CD4-positive, alpha-beta T cell (primary cell): ENCODE measurements at regions of chr6 and their contacts with region 1.

Region 1: DNA sequence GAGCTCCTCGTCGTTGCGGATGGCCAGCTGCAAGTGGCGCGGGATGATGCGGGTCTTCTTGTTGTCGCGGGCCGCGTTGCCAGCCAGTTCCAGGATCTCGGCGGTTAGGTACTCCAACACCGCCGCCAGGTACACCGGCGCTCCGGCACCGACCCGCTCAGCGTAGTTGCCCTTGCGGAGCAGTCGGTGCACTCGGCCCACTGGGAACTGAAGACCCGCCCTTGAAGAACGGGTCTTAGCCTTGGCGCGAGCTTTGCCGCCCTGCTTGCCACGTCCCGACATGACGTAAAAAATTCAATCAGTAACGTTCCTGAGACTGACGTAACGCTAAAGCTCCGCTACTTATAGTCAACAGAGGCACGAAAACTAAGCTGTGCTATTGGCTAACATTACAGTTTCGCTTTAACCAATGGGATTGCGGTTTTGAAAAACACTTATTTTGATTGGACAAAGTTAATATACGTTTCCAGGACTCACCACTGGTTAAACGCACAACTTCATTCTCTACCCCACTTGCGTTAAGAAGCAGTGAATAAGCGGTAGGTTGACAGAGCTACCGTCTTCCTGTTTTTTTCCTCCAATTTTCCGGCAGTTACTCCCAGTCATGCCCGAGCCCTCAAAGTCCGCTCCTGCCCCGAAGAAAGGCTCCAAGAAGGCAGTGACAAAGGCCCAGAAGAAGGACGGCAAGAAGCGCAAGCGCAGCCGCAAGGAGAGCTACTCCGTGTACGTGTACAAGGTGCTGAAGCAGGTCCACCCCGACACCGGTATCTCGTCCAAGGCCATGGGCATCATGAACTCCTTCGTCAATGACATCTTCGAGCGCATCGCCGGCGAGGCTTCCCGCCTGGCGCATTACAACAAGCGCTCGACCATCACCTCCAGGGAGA is 73.9 kb downstream of the OR2B2 start:
- DNase-seq: peak; percentile 52 to 98 (median 73)
- ATAC-seq: peak; percentile 73
- H3K4me3 ChIP-seq: peak overlapping the region; percentile 83
- H3K4me3 Mint-ChIP-seq: no peak overlapping the region
- H3K27ac ChIP-seq: peak overlapping the region; percentile 92 to 97
- H3K27ac Mint-ChIP-seq: no peak overlapping the region
- H3K4me1 ChIP-seq: peaks cover 32% of the 10 kb centered on the region
- H3K4me1 Mint-ChIP-seq: peaks cover 6% of the 10 kb centered on the region
- H3K27me3 ChIP-seq: peaks cover 0 to 6% of the 10 kb centered on the region in 2 experiments
- H3K27me3 Mint-ChIP-seq: peaks cover 12% of the 10 kb centered on the region
- CTCF ChIP-seq: no peak

Region 2: DNA sequence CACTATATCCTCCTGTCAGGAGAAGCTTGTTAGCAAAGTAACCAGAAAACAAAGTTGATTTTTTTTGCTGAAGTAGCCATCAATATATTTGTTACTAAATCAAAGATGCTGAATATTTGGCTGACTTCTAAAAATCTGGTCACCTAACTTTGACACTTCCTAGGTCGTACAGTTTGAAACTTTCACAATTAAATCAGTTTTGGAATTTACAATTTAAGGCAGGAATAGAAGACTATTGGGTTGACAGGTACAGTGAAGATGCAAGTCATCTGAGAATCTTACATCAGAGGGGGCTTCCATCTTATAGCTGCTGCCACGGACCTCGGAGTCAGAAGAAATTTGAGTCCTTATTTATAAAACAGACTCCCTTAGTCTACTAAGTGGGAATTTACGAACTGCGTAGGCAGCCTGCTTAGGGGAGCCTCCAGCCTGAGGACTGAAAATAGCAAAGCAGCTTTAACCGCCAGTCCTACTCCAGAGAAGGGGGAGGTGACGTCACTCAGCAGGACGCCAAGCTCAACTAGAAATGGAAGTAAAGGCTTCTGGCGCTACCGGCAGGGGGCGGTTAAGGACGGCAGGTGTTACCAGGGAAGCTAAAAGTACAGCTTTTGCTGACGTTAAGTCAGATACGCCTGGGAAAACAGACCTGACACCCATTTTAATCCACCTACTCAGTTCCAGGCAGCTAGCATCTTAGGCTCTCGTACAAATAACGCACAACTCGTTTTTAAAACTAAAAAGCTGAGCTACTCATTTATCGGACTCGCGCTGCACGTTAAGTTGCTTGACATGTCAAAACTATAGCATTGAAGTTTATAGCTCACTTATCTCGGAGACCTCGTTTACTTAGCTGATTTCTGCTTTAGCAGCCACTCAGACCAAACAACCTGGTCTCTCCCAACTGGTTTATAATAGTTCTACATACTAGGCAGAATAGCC is 1812.1 kb before region 1 on chr6:
- CTCF ChIA-PET with region 1: no interaction called
- POLR2A ChIA-PET with region 1: interaction called, 85 read pairs
- intact Hi-C with region 1: no loop called
- DNase-seq: peak; percentile 75 to 98 (median 88)
- ATAC-seq: peak; percentile 45
- H3K4me3 ChIP-seq: peak overlapping the region; percentile 70
- H3K4me3 Mint-ChIP-seq: peak overlapping the region; percentile 90
- H3K27ac ChIP-seq: peak overlapping the region; percentile 86 to 88
- H3K27ac Mint-ChIP-seq: peak overlapping the region; percentile 97
- H3K4me1 ChIP-seq: peaks cover 34% of the 10 kb centered on the region
- H3K4me1 Mint-ChIP-seq: peaks cover 42% of the 10 kb centered on the region
- H3K27me3 ChIP-seq: no peaks in the 10 kb centered on the region
- H3K27me3 Mint-ChIP-seq: no peaks in the 10 kb centered on the region
- CTCF ChIP-seq: peak; percentile 86

Region 3: DNA sequence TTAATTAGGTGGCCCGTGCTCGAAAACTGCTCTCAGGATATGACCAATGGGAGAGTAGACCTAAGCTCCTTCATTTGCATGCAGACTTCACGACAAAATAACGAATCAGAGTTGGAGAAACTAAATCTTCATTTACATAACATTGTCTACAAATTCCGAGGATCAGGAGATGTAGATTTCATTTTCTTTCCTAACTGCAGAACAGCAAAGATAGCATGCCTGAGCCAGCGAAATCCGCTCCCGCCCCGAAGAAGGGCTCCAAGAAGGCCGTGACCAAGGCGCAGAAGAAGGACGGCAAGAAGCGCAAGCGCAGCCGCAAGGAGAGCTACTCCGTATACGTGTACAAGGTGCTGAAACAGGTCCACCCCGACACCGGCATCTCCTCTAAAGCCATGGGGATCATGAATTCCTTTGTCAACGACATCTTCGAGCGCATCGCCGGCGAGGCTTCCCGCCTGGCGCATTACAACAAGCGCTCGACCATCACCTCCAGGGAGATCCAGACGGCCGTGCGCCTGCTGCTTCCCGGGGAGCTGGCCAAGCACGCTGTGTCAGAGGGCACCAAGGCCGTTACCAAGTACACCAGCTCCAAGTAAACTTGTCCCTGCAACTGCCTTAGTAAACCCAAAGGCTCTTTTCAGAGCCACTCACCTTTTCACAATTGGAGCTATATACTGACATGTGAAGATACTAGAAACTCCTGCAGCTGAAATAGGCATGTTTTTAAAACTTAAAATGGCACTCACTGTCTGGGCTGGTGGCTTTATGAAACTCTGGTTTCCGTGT is 1654.5 kb before region 1 on chr6:
- CTCF ChIA-PET with region 1: no interaction called
- POLR2A ChIA-PET with region 1: interaction called, 18 read pairs
- intact Hi-C with region 1: no loop called
- DNase-seq: peak in 13 of 14 experiments; percentile 20 to 94 (median 48)
- ATAC-seq: peak; percentile 89
- H3K4me3 ChIP-seq: peak overlapping the region; percentile 62
- H3K4me3 Mint-ChIP-seq: peak overlapping the region; percentile 99
- H3K27ac ChIP-seq: peak overlapping the region; percentile 43 to 72
- H3K27ac Mint-ChIP-seq: peak overlapping the region; percentile 86
- H3K4me1 ChIP-seq: peaks cover 34% of the 10 kb centered on the region
- H3K4me1 Mint-ChIP-seq: peaks cover 42% of the 10 kb centered on the region
- H3K27me3 ChIP-seq: no peaks in the 10 kb centered on the region
- H3K27me3 Mint-ChIP-seq: no peaks in the 10 kb centered on the region
- CTCF ChIP-seq: no peak

Region 4: GRCh38 chr6:27132532-27133280 is 705.6 kb before region 1 on chr6:
- CTCF ChIA-PET with region 1: no interaction called
- POLR2A ChIA-PET with region 1: interaction called, 89 read pairs
- intact Hi-C with region 1: no loop called
- DNase-seq: peak; percentile 80 to 99 (median 88)
- ATAC-seq: peak; percentile 79
- H3K4me3 ChIP-seq: peak overlapping the region; percentile 75
- H3K4me3 Mint-ChIP-seq: no peak overlapping the region
- H3K27ac ChIP-seq: peak overlapping the region; percentile 79 to 81
- H3K27ac Mint-ChIP-seq: no peak overlapping the region
- H3K4me1 ChIP-seq: peaks cover 31% of the 10 kb centered on the region
- H3K4me1 Mint-ChIP-seq: peaks cover 12% of the 10 kb centered on the region
- H3K27me3 ChIP-seq: no peaks in the 10 kb centered on the region
- H3K27me3 Mint-ChIP-seq: no peaks in the 10 kb centered on the region
- CTCF ChIP-seq: no peak

Region 5: GRCh38 chr6:27479319-27480182 is 358.8 kb before region 1 on chr6:
- CTCF ChIA-PET with region 1: no interaction called
- POLR2A ChIA-PET with region 1: interaction called, 43 read pairs
- intact Hi-C with region 1: no loop called
- DNase-seq: peak; percentile 82 to 94 (median 90)
- ATAC-seq: peak; percentile 71
- H3K4me3 ChIP-seq: peak overlapping the region; percentile 62
- H3K4me3 Mint-ChIP-seq: no peak overlapping the region
- H3K27ac ChIP-seq: peak overlapping the region; percentile 93 to 94
- H3K27ac Mint-ChIP-seq: no peak overlapping the region
- H3K4me1 ChIP-seq: peaks cover 16% of the 10 kb centered on the region
- H3K4me1 Mint-ChIP-seq: peaks cover 3% of the 10 kb centered on the region
- H3K27me3 ChIP-seq: no peaks in the 10 kb centered on the region
- H3K27me3 Mint-ChIP-seq: no peaks in the 10 kb centered on the region
- CTCF ChIP-seq: no peak

Region 6: GRCh38 chr6:27825025-27825793 is 13.1 kb before region 1 on chr6:
- CTCF ChIA-PET with region 1: interaction called, 26 read pairs
- POLR2A ChIA-PET with region 1: interaction called, 390 read pairs
- intact Hi-C with region 1: loop called in 1 of 2 experiments (anchors 1 kb)
- DNase-seq: peak in 2 of 14 experiments; percentile 27 to 38
- ATAC-seq: no peak
- H3K4me3 ChIP-seq: peak overlapping the region; percentile 82
- H3K4me3 Mint-ChIP-seq: peak overlapping the region; percentile 90
- H3K27ac ChIP-seq: peak overlapping the region; percentile 77 to 87
- H3K27ac Mint-ChIP-seq: peak overlapping the region; percentile 99
- H3K4me1 ChIP-seq: peaks cover 8% of the 10 kb centered on the region
- H3K4me1 Mint-ChIP-seq: peaks cover 38% of the 10 kb centered on the region
- H3K27me3 ChIP-seq: no peaks in the 10 kb centered on the region
- H3K27me3 Mint-ChIP-seq: no peaks in the 10 kb centered on the region
- CTCF ChIP-seq: no peak